ENCODE measurements at regions of chr10 and their contacts with region 1.

Region 1: GRCh38 chr10:7410862-7411670 is at the start of gene SFMBT2:
- DNase-seq: peak in 31 of 35 experiments; percentile 24 to 83 (median 51)
- ATAC-seq: peak; percentile 44 to 61 (median 54)
- H3K4me3 ChIP-seq: peak within 1 kb of the TSS; percentile 80 to 97
- H3K4me3 Mint-ChIP-seq: peak within 1 kb of the TSS; percentile 93 to 99 (median 94)
- H3K27ac ChIP-seq: peak within 1 kb of the TSS; percentile 42
- H3K27ac Mint-ChIP-seq: peak within 1 kb of the TSS; percentile 89 to 94
- H3K4me1 ChIP-seq: peaks cover 20 to 48% of the 10 kb centered on the region in 2 experiments
- H3K4me1 Mint-ChIP-seq: peaks cover 41 to 47% (median 41%) of the 10 kb centered on the region in 3 donors
- H3K27me3 ChIP-seq: peaks cover 3 to 27% of the 10 kb centered on the region in 2 experiments
- H3K27me3 Mint-ChIP-seq: peaks cover 0 to 4% of the 10 kb centered on the region in 2 donors
- total RNA-seq, gene SFMBT2: 32.7 to 38.3 (median 36.8) TPM

Region 2: DNA sequence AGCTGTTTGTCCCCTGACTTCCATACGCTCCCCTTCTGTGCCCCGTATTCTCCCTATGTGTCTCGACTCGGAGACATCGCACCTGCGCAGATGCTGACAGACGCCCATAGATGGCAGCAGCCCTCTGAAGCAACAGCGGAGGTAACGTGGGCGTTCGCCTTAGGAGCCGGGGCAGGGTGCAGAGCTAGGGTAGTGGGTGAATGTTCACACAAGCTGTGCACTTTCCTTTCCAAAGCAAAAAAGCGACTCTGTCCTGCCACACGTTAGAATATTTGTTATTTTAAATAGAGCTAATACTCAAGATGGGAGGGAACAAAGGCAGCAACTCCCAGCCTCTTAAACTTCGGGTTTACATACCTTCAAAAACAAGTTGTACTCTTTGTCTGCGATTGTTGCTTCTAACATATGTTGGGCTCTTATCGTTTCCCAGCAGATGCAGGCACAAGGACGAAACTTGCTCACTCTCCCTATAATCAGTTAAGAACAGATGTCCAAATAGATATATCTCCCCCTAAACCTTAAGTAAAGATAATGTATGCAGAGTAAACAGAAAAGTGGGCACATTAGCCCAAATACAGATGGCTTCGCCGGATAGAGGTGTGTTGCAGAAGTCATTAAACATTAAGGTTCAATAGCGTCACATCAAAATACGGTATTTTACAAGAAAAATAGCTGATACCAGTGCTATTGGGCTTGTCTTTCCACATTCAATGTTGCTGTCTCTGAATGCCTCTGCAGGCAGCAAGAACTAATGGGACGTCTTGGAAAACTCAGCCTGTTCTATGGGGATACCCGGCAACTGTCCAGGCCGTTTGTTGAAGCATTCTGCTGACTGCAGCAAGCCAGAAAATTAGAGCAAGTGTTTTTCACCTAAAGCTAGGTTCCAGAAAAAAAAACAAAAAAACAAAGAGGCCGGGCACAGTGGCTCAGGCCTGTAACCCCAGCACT is 490.7 kb before region 1 on chr10:
- CTCF ChIA-PET with region 1: interaction called, 24 to 26 read pairs
- POLR2A ChIA-PET with region 1: interaction called, 6 to 11 read pairs
- DNase-seq: peak; percentile 47 to 86 (median 71)
- ATAC-seq: peak; percentile 96 to 100 (median 100)
- H3K4me3 ChIP-seq: no peak overlapping the region
- H3K4me3 Mint-ChIP-seq: no peak overlapping the region
- H3K27ac ChIP-seq: no peak overlapping the region
- H3K27ac Mint-ChIP-seq: no peak overlapping the region
- H3K4me1 ChIP-seq: peaks cover 0 to 7% of the 10 kb centered on the region in 2 experiments
- H3K4me1 Mint-ChIP-seq: peaks cover 10 to 23% (median 18%) of the 10 kb centered on the region in 3 donors
- H3K27me3 ChIP-seq: no peaks in the 10 kb centered on the region
- H3K27me3 Mint-ChIP-seq: peaks cover 0 to 11% of the 10 kb centered on the region in 2 donors

Region 3: DNA sequence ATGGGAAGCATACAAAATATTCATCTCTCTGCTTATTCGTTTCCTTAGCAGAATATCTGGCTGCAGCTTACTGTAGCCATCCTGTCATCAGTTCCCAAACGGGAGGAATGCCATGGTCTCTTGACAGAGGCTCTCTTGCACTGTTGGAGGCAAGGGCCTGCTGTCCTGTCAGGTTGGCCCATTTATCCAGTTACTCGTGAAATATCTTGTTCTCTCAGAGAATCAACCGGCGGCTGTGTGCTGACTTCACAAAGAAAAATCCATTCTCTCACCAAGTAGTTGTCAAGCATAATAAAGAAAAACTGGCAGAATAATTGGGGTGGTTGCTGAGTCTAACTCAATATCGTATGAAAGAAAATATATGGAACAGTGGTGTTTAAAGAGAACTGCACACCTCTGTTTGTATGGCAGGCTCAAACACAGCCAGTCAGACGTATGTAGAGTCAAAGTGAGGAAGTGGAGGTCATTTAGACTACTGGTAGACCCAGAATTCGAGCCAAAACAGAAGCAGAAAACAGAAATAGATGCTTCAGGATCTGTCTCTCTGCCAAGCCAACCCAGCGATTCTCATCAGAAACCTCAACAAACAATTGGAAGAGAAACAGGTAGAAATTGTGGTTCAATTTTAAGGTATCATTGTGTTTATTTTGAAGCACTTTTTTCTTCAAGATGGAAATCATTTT is 481.8 kb before region 1 on chr10:
- CTCF ChIA-PET with region 1: interaction called, 4 read pairs
- POLR2A ChIA-PET with region 1: interaction called in 1 of 2 experiments, 10 read pairs
- DNase-seq: peak in 1 of 35 experiments; percentile 42
- ATAC-seq: no peak
- H3K4me3 ChIP-seq: no peak overlapping the region
- H3K4me3 Mint-ChIP-seq: no peak overlapping the region
- H3K27ac ChIP-seq: peak overlapping the region; percentile 84
- H3K27ac Mint-ChIP-seq: peak overlapping the region in 1 of 2 donors; percentile 29
- H3K4me1 ChIP-seq: peaks cover 32 to 33% of the 10 kb centered on the region in 2 experiments
- H3K4me1 Mint-ChIP-seq: peaks cover 34 to 49% (median 47%) of the 10 kb centered on the region in 3 donors
- H3K27me3 ChIP-seq: no peaks in the 10 kb centered on the region
- H3K27me3 Mint-ChIP-seq: peaks cover 0 to 12% of the 10 kb centered on the region in 2 donors

Region 4: GRCh38 chr10:7003831-7004395 is 407.2 kb before region 1 on chr10:
- CTCF ChIA-PET with region 1: interaction called in 1 of 2 experiments, 5 read pairs
- POLR2A ChIA-PET with region 1: interaction called in 1 of 2 experiments, 11 read pairs
- DNase-seq: no peak
- ATAC-seq: no peak
- H3K4me3 ChIP-seq: no peak overlapping the region
- H3K4me3 Mint-ChIP-seq: no peak overlapping the region
- H3K27ac ChIP-seq: no peak overlapping the region
- H3K27ac Mint-ChIP-seq: no peak overlapping the region
- H3K4me1 ChIP-seq: peaks cover 0 to 10% of the 10 kb centered on the region in 2 experiments
- H3K4me1 Mint-ChIP-seq: peaks cover 0 to 11% (median 0%) of the 10 kb centered on the region in 3 donors
- H3K27me3 ChIP-seq: no peaks in the 10 kb centered on the region
- H3K27me3 Mint-ChIP-seq: peaks cover 0 to 7% of the 10 kb centered on the region in 2 donors

Region 5: DNA sequence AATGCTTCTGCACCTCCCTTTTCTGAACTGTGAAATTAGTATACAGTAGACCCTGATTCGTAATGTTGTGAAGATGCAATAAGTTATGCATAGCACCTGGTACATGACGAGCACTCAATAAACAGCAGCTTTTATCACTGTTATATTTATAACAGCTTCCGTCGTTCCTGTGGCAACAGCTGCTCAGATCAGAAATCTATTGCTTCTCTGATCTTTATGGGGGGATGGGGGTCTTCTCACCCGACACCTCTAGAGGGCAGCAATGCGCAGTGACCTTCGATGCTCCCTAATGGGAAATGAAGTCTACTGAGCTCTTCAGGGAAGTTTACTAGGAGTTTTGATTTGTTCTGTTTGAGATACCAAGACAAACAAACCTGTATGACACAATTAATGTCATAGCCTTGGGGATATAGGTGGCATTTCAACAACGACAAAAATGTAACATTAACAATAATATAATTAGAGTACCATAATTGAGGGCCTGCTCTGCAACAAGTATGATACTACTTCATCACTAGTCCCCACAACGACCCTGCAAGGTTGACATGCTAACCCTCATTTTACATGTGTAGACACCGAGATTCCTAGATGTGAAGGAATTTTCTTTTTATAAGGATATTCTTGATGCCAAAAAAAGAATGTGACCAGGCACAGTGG is 289.8 kb before region 1 on chr10:
- CTCF ChIA-PET with region 1: interaction called in 1 of 2 experiments, 14 read pairs
- POLR2A ChIA-PET with region 1: interaction called in 1 of 2 experiments, 3 read pairs
- DNase-seq: peak; percentile 44 to 86 (median 67)
- ATAC-seq: peak; percentile 75 to 99 (median 84)
- H3K4me3 ChIP-seq: no peak overlapping the region
- H3K4me3 Mint-ChIP-seq: no peak overlapping the region
- H3K27ac ChIP-seq: no peak overlapping the region
- H3K27ac Mint-ChIP-seq: no peak overlapping the region
- H3K4me1 ChIP-seq: peaks cover 0 to 9% of the 10 kb centered on the region in 2 experiments
- H3K4me1 Mint-ChIP-seq: peaks cover 6 to 10% (median 9%) of the 10 kb centered on the region in 3 donors
- H3K27me3 ChIP-seq: no peaks in the 10 kb centered on the region
- H3K27me3 Mint-ChIP-seq: no peaks in the 10 kb centered on the region

Region 6: GRCh38 chr10:7159517-7159916 is 251.5 kb before region 1 on chr10:
- CTCF ChIA-PET with region 1: no interaction called
- POLR2A ChIA-PET with region 1: interaction called in 1 of 2 experiments, 11 read pairs
- DNase-seq: peak in 2 of 35 experiments; percentile 11 to 45
- ATAC-seq: peak in 3 of 4 experiments; percentile 60 to 78 (median 61)
- H3K4me3 ChIP-seq: no peak overlapping the region
- H3K4me3 Mint-ChIP-seq: peak overlapping the region in 1 of 3 donors; percentile 11
- H3K27ac ChIP-seq: peak overlapping the region; percentile 11
- H3K27ac Mint-ChIP-seq: peak overlapping the region; percentile 65 to 77
- H3K4me1 ChIP-seq: peaks cover 11% of the 10 kb centered on the region in 2 experiments
- H3K4me1 Mint-ChIP-seq: peaks cover 32 to 44% (median 32%) of the 10 kb centered on the region in 3 donors
- H3K27me3 ChIP-seq: no peaks in the 10 kb centered on the region
- H3K27me3 Mint-ChIP-seq: no peaks in the 10 kb centered on the region